CD4-positive, alpha-beta memory T cell (primary cell): ENCODE measurements at regions of chr12 and their contacts with region 1.

Region 1: DNA sequence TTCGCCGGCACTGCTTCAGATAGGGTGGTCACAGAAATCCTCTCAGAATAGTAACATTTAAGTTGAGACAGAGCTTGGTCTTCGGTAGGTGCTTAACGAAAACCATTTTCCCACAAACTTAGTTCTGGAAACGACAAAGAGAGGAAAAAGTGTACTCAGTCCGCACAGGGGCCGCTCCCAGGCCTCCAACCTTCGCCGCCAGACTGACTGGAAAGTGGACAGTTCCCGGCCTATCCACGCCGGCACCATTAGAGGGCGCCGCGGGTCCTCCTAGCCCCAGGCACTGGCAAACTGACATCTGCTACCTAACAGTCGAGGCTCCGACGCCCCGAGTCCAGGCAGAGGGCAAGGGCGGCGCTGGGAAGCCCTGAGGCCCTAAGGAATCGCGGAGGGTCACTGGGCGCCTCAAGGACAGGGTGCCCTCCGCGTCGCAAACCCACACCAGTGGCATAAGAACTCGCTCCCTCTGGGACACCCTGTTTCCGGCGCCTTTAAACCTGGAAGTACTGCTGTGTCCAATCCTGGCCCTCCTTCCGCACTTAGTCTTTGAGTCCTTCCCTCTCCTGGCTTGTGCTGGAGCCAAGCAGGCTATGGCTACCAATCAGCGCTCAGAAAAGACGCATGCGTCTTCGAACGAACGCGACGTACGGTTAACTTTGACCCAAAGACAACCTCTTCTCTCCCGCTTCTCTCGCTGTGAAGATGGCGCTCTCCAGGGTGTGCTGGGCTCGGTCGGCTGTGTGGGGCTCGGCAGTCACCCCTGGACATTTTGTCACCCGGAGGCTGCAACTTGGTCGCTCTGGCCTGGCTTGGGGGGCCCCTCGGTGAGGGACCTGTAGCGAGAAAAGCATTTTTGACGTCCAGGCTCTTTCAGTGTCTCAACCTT is at the start of gene LETMD1:
- DNase-seq: peak; percentile 94 to 97 (median 96)
- H3K4me3 ChIP-seq: peak within 1 kb of the TSS; percentile 92 to 98
- H3K4me3 Mint-ChIP-seq: peak within 1 kb of the TSS; percentile 93 to 98 (median 95)
- H3K27ac ChIP-seq: peak within 1 kb of the TSS; percentile 81
- H3K27ac Mint-ChIP-seq: peak within 1 kb of the TSS; percentile 95 to 99 (median 97)
- H3K4me1 ChIP-seq: peaks cover 27% of the 10 kb centered on the region
- H3K4me1 Mint-ChIP-seq: peaks cover 15 to 40% (median 28%) of the 10 kb centered on the region in 4 donors
- H3K27me3 ChIP-seq: no peaks in the 10 kb centered on the region
- H3K27me3 Mint-ChIP-seq: no peaks in the 10 kb centered on the region
- total RNA-seq, gene LETMD1: 83.7 to 93.3 TPM

Region 2: GRCh38 chr12:51083126-51083833 is 35.4 kb after region 1 on chr12 and contains the start of gene CSRNP2:
- CTCF ChIA-PET with region 1: interaction called, 5 read pairs
- POLR2A ChIA-PET with region 1: interaction called, 23 read pairs
- intact Hi-C with region 1: loop called (anchors 1 kb)
- DNase-seq: peak; percentile 94 to 96 (median 95)
- H3K4me3 ChIP-seq: peak within 1 kb of the TSS; percentile 67 to 93
- H3K4me3 Mint-ChIP-seq: peak within 1 kb of the TSS; percentile 93 to 98 (median 96)
- H3K27ac ChIP-seq: peak within 1 kb of the TSS; percentile 86
- H3K27ac Mint-ChIP-seq: peak within 1 kb of the TSS; percentile 88 to 97 (median 95)
- H3K4me1 ChIP-seq: peaks cover 21% of the 10 kb centered on the region
- H3K4me1 Mint-ChIP-seq: peaks cover 28 to 45% (median 36%) of the 10 kb centered on the region in 4 donors
- H3K27me3 ChIP-seq: no peaks in the 10 kb centered on the region
- H3K27me3 Mint-ChIP-seq: no peaks in the 10 kb centered on the region
- total RNA-seq, gene CSRNP2: 34.1 to 35.0 TPM

Region 3: GRCh38 chr12:51205350-51205749 is 157.5 kb after region 1 on chr12:
- CTCF ChIA-PET with region 1: no interaction called
- POLR2A ChIA-PET with region 1: no interaction called
- intact Hi-C with region 1: no loop called
- DNase-seq: no peak
- H3K4me3 ChIP-seq: no peak overlapping the region
- H3K4me3 Mint-ChIP-seq: no peak overlapping the region
- H3K27ac ChIP-seq: no peak overlapping the region
- H3K27ac Mint-ChIP-seq: peak overlapping the region in 4 of 7 donors; percentile 15 to 79 (median 60)
- H3K4me1 ChIP-seq: peaks cover 28% of the 10 kb centered on the region
- H3K4me1 Mint-ChIP-seq: peaks cover 10 to 36% (median 17%) of the 10 kb centered on the region in 4 donors
- H3K27me3 ChIP-seq: no peaks in the 10 kb centered on the region
- H3K27me3 Mint-ChIP-seq: no peaks in the 10 kb centered on the region

Region 4: GRCh38 chr12:51217968-51218606 is 170.2 kb after region 1 on chr12 and contains the start of gene POU6F1:
- CTCF ChIA-PET with region 1: no interaction called
- POLR2A ChIA-PET with region 1: interaction called, 22 read pairs
- intact Hi-C with region 1: loop called (anchors 1 kb)
- DNase-seq: peak; percentile 76 to 82 (median 80)
- H3K4me3 ChIP-seq: peak within 1 kb of the TSS; percentile 90 to 99
- H3K4me3 Mint-ChIP-seq: peak within 1 kb of the TSS; percentile 90 to 96 (median 94)
- H3K27ac ChIP-seq: peak within 1 kb of the TSS; percentile 91
- H3K27ac Mint-ChIP-seq: peak within 1 kb of the TSS; percentile 94 to 99 (median 97)
- H3K4me1 ChIP-seq: peaks cover 25% of the 10 kb centered on the region
- H3K4me1 Mint-ChIP-seq: peaks cover 19 to 39% (median 29%) of the 10 kb centered on the region in 4 donors
- H3K27me3 ChIP-seq: no peaks in the 10 kb centered on the region
- H3K27me3 Mint-ChIP-seq: no peaks in the 10 kb centered on the region
- total RNA-seq, gene POU6F1: 71.9 to 79.8 TPM

Region 5: DNA sequence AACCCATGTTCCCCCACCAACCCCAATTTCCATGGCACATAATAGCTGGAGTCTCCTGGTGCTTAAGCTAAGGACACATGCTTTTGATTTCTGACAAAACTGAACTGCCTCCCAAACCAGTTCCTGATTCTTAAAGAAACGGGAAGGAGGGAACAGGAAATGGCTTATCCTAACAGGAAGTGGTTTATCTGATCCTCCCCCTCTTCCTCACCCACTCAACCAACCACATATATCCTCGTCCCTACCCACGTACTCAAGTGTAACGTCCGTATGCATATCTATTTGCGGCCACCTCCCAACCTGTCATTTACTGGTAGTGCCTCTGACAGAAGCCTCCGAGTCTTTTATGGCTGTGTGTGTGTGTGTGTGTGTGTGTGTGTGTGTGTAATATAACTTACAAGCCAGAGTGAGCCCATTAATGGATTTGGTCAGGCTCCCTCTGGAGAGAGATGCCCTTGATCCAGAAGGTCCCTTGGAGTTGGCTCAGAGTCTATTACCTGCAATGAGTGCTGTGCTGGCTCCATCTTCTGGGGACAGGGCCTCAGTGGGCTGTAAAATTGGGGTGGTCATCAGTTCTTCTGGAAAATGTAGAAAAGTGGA is 198.5 kb after region 1 on chr12:
- CTCF ChIA-PET with region 1: interaction called, 4 read pairs
- POLR2A ChIA-PET with region 1: interaction called, 5 read pairs
- intact Hi-C with region 1: loop called (anchors 1 kb)
- DNase-seq: peak; percentile 38 to 71 (median 57)
- H3K4me3 ChIP-seq: no peak overlapping the region
- H3K4me3 Mint-ChIP-seq: peak overlapping the region in 7 of 8 donors; percentile 32 to 58 (median 45)
- H3K27ac ChIP-seq: peak overlapping the region; percentile 42
- H3K27ac Mint-ChIP-seq: peak overlapping the region; percentile 88 to 100 (median 92)
- H3K4me1 ChIP-seq: peaks cover 53% of the 10 kb centered on the region
- H3K4me1 Mint-ChIP-seq: peaks cover 44 to 75% (median 55%) of the 10 kb centered on the region in 4 donors
- H3K27me3 ChIP-seq: no peaks in the 10 kb centered on the region
- H3K27me3 Mint-ChIP-seq: no peaks in the 10 kb centered on the region

Region 6: DNA sequence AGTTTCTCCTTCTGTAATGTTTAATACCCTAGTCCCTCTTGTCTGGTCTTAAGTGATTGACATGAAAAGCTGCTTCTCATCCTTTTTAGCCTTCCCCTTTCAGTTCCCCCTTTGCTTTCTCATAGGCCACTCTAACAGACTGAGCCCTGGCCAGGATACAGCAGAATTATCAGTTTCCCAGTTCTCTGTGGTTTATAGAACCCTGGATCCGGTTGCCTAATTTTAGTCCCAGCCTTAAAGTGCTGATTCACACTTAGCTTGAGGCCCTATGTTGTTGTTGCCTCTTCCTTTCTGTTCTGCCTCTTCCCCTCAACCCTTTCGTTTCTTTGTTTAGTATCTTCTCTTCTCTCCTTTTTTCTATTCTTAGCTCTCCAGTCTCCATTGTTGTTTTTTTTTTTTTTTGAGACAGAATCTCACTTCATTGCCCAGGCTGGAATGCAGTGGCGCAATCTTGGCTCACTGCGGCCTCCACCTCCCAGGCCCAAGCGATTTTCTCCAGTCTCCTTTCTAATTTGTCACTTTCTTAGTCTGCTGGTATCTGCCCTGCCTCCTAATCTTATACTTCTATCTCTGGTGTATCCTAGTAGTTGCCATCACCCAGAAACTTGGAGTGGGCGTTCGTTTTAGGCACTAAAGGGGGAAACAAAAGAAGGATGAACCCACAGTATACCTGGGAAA is 279.0 kb after region 1 on chr12:
- CTCF ChIA-PET with region 1: no interaction called
- POLR2A ChIA-PET with region 1: interaction called, 5 read pairs
- intact Hi-C with region 1: loop called (anchors 5 kb)
- DNase-seq: no peak
- H3K4me3 ChIP-seq: no peak overlapping the region
- H3K4me3 Mint-ChIP-seq: peak overlapping the region in 7 of 8 donors; percentile 40 to 74 (median 64)
- H3K27ac ChIP-seq: peak overlapping the region; percentile 27
- H3K27ac Mint-ChIP-seq: peak overlapping the region; percentile 77 to 98 (median 94)
- H3K4me1 ChIP-seq: peaks cover 65% of the 10 kb centered on the region
- H3K4me1 Mint-ChIP-seq: peaks cover 51 to 91% (median 71%) of the 10 kb centered on the region in 4 donors
- H3K27me3 ChIP-seq: no peaks in the 10 kb centered on the region
- H3K27me3 Mint-ChIP-seq: no peaks in the 10 kb centered on the region